Activated CD4-positive, alpha-beta T cell treated with anti-CD3 and anti-CD28 coated beads for 36 hours (primary cell): ENCODE measurements at regions of chr2 and their contacts with region 1.

Region 1: GRCh38 chr2:160252278-160252887 is 52.3 kb upstream of the ITGB6 start:
- DNase-seq: no peak
- ATAC-seq: no peak
- H3K4me3 Mint-ChIP-seq: no peak overlapping the region
- H3K27ac Mint-ChIP-seq: no peak overlapping the region
- H3K4me1 Mint-ChIP-seq: no peaks in the 10 kb centered on the region
- H3K27me3 Mint-ChIP-seq: no peaks in the 10 kb centered on the region

Region 2: GRCh38 chr2:160109936-160110673 is 142.3 kb before region 1 on chr2:
- CTCF ChIA-PET with region 1: interaction called, 14 read pairs
- POLR2A ChIA-PET with region 1: no interaction called
- intact Hi-C with region 1: no loop called
- DNase-seq: peak; percentile 74
- ATAC-seq: peak; percentile 82
- H3K4me3 Mint-ChIP-seq: no peak overlapping the region
- H3K27ac Mint-ChIP-seq: no peak overlapping the region
- H3K4me1 Mint-ChIP-seq: no peaks in the 10 kb centered on the region
- H3K27me3 Mint-ChIP-seq: peaks cover 4% of the 10 kb centered on the region

Region 3: GRCh38 chr2:160229592-160229991 is 22.8 kb before region 1 on chr2:
- CTCF ChIA-PET with region 1: interaction called, 4 read pairs
- POLR2A ChIA-PET with region 1: no interaction called
- intact Hi-C with region 1: loop called in 1 of 2 experiments (anchors 1 kb)
- DNase-seq: no peak
- ATAC-seq: no peak
- H3K4me3 Mint-ChIP-seq: no peak overlapping the region
- H3K27ac Mint-ChIP-seq: no peak overlapping the region
- H3K4me1 Mint-ChIP-seq: peaks cover 12% of the 10 kb centered on the region
- H3K27me3 Mint-ChIP-seq: peaks cover 15% of the 10 kb centered on the region

Region 4: GRCh38 chr2:160269803-160270570 is 17.6 kb after region 1 on chr2:
- CTCF ChIA-PET with region 1: interaction called, 11 read pairs
- POLR2A ChIA-PET with region 1: no interaction called
- intact Hi-C with region 1: no loop called
- DNase-seq: peak; percentile 80
- ATAC-seq: peak; percentile 59
- H3K4me3 Mint-ChIP-seq: peak overlapping the region; percentile 57
- H3K27ac Mint-ChIP-seq: peak overlapping the region; percentile 52
- H3K4me1 Mint-ChIP-seq: peaks cover 46% of the 10 kb centered on the region
- H3K27me3 Mint-ChIP-seq: no peaks in the 10 kb centered on the region

Region 5: DNA sequence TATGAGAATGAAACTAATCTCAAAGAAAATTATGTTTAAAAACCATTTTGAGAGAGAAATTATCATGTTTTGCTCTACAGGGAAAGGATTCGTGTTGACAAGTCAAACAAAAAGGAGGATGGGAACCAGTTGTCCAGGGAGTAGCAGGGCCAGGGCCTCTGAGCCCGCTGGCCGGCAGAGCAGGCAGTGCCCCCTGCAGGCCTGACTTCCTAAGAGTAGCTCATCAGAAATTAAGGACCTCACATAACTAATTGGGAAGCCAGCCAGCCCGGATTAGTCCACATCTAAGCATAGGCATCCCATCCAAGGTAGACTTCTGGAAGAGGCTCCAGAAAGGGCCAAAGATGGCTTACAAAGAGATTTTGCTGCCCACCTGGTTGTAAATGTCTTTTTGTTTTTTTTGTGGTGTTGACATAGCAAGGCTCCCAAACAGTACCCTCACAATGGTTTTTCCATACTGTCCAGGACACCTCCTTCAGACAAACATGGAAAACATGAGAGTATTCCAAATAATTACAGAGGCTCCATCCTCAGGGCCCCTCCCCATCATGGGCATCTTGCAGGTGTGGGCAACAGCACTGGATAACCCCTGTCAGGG is 666.6 kb after region 1 on chr2:
- CTCF ChIA-PET with region 1: interaction called, 3 read pairs
- POLR2A ChIA-PET with region 1: no interaction called
- intact Hi-C with region 1: loop called in 1 of 2 experiments (anchors 2 kb)
- DNase-seq: peak; percentile 65
- ATAC-seq: no peak
- H3K4me3 Mint-ChIP-seq: no peak overlapping the region
- H3K27ac Mint-ChIP-seq: no peak overlapping the region
- H3K4me1 Mint-ChIP-seq: no peaks in the 10 kb centered on the region
- H3K27me3 Mint-ChIP-seq: no peaks in the 10 kb centered on the region

Region 6: DNA sequence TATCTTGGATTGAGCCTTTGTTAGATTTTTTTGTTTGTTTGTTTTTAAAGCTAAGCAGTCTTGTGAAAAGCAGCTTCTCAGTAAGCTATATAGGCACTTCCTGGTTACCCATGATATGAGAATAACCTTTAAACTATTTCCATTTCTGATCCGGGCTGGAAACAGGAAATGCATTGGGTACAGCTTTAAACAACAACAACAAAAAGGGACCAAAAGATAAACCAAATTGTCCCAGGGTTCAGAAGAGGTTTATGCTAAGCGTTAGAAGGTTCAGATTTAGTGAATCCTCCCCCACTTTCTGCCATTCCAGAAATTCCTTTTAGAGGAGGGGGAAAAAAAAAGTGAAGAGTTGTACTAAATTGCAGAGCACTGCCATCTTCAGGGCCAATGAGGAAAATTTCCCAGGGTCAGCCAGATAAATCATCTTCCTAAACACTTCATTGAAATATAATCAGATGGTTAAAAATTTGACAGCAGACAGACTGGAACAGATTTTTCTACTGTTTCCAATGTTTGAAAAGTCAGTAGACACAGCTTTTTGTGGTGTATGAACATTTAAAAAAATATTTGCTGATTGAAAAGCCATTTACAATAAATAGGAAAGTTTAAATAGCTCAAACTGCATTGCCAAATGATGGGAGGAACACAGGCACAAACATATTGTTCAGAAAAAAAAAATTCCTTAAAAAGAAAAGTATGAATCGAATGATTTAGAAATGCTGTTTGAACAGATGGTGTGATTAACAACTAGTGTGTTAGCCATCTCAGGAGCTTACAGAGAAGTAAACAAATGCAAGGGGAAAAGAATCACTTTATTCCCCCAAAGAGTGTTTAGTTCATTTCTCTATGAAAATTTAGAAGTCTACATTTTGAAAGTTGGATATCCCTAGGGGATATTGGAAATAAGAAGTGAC is 717.9 kb after region 1 on chr2:
- CTCF ChIA-PET with region 1: interaction called, 6 read pairs
- POLR2A ChIA-PET with region 1: no interaction called
- intact Hi-C with region 1: loop called in 1 of 2 experiments (anchors 1 kb)
- DNase-seq: peak; percentile 20
- ATAC-seq: no peak
- H3K4me3 Mint-ChIP-seq: no peak overlapping the region
- H3K27ac Mint-ChIP-seq: no peak overlapping the region
- H3K4me1 Mint-ChIP-seq: peaks cover 5% of the 10 kb centered on the region
- H3K27me3 Mint-ChIP-seq: peaks cover 1% of the 10 kb centered on the region

Region 7: DNA sequence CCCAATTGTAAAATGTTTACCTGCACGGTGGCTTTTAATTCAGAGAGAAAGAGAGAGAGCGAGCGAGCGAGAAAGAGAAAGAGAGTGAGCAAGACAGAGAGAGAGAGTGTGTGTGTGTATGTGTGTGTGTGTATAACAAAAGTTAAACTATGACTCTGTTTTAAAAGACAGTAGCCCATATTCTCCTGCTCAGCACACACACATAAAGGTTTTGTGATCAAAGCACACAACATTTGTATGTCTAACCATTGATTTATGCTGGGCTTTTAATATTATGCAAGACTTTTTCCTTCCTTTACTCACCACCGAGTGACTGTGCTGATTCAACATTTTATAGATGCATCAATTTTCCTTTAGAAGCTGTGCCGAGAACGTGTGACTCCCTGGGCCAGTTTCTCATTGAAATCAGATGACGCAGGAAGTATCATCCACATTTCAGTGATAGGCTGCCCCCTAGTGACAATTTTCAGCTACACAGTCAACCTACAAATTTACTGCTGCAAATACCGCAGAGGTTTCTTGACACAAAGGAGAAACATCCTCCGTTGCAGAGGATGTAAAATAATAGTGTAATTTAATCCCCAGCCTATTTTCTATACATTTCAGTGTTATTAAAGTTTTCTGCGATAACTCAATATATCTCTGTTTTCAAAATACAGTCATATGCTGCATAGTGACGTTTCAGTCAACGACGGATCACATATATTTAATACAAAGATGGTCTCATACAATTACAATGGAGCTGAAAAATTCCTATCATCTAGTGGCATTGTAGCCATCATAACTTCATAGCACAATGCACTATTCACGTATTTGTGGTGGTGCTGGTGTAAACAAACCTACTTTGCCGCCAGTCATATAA is 742.0 kb after region 1 on chr2:
- CTCF ChIA-PET with region 1: interaction called, 6 read pairs
- POLR2A ChIA-PET with region 1: no interaction called
- intact Hi-C with region 1: loop called (anchors 1 kb)
- DNase-seq: peak; percentile 79
- ATAC-seq: peak; percentile 94
- H3K4me3 Mint-ChIP-seq: no peak overlapping the region
- H3K27ac Mint-ChIP-seq: no peak overlapping the region
- H3K4me1 Mint-ChIP-seq: peaks cover 10% of the 10 kb centered on the region
- H3K27me3 Mint-ChIP-seq: no peaks in the 10 kb centered on the region